Activated naive CD4-positive, alpha-beta T cell treated with anti-CD3 and anti-CD28 coated beads, Interleukin-2, amount 10 ng/mL, durations not matched to agents 7 days and 5 days (primary cell): ENCODE measurements at regions of chr22 and their contacts with region 1.

Region 1: GRCh38 chr22:33519071-33519973 is 401.0 kb downstream of the LARGE1 start:
- DNase-seq: no peak
- H3K4me3 Mint-ChIP-seq: no peak overlapping the region
- H3K27ac Mint-ChIP-seq: no peak overlapping the region
- H3K4me1 Mint-ChIP-seq: no peaks in the 10 kb centered on the region
- H3K27me3 Mint-ChIP-seq: no peaks in the 10 kb centered on the region

Region 2: GRCh38 chr22:33455036-33455435 is 64.3 kb before region 1 on chr22:
- CTCF ChIA-PET with region 1: no interaction called
- DNase-seq: no peak
- H3K4me3 Mint-ChIP-seq: no peak overlapping the region
- H3K27ac Mint-ChIP-seq: no peak overlapping the region
- H3K4me1 Mint-ChIP-seq: no peaks in the 10 kb centered on the region
- H3K27me3 Mint-ChIP-seq: no peaks in the 10 kb centered on the region

Region 3: GRCh38 chr22:33579448-33580093 is 60.2 kb after region 1 on chr22:
- CTCF ChIA-PET with region 1: interaction called, 19 read pairs
- DNase-seq: peak; percentile 55
- H3K4me3 Mint-ChIP-seq: no peak overlapping the region
- H3K27ac Mint-ChIP-seq: no peak overlapping the region
- H3K4me1 Mint-ChIP-seq: no peaks in the 10 kb centered on the region
- H3K27me3 Mint-ChIP-seq: no peaks in the 10 kb centered on the region